OCI-LY7 (cell line): ENCODE measurements at regions of chr3 and their contacts with region 1.

Region 1: DNA sequence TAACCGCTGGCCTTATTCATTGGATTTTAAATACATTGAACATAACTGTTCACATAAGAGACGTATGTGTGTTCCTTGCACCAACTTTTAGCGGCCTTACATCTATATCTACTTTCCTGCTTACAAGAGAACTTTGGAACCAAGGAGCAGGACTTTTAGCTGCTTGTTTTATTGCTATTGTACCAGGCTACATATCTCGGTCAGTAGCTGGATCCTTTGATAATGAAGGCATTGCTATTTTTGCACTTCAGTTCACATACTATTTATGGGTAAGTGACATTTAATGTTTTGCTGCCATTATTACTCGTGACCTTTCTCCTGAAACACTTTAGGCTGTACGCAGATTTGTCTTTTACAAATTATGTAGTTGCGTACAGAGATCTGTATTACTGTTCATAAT is 47.1 kb downstream of the STT3B start:
- DNase-seq: no peak
- H3K4me3 ChIP-seq: no peak overlapping the region
- H3K27ac ChIP-seq: no peak overlapping the region
- H3K4me1 ChIP-seq: peaks cover 20% of the 10 kb centered on the region
- CTCF ChIP-seq: no peak

Region 2: GRCh38 chr3:31568649-31569048 is 11.2 kb before region 1 on chr3:
- CTCF ChIA-PET with region 1: interaction called, 4 read pairs
- POLR2A ChIA-PET with region 1: interaction called, 13 read pairs
- intact Hi-C with region 1: no loop called
- DNase-seq: no peak
- H3K4me3 ChIP-seq: no peak overlapping the region
- H3K27ac ChIP-seq: no peak overlapping the region
- H3K4me1 ChIP-seq: peaks cover 32% of the 10 kb centered on the region
- CTCF ChIP-seq: no peak